HCT116 (cell line): ENCODE measurements at regions of chr20 and their contacts with region 1.

Region 1: DNA sequence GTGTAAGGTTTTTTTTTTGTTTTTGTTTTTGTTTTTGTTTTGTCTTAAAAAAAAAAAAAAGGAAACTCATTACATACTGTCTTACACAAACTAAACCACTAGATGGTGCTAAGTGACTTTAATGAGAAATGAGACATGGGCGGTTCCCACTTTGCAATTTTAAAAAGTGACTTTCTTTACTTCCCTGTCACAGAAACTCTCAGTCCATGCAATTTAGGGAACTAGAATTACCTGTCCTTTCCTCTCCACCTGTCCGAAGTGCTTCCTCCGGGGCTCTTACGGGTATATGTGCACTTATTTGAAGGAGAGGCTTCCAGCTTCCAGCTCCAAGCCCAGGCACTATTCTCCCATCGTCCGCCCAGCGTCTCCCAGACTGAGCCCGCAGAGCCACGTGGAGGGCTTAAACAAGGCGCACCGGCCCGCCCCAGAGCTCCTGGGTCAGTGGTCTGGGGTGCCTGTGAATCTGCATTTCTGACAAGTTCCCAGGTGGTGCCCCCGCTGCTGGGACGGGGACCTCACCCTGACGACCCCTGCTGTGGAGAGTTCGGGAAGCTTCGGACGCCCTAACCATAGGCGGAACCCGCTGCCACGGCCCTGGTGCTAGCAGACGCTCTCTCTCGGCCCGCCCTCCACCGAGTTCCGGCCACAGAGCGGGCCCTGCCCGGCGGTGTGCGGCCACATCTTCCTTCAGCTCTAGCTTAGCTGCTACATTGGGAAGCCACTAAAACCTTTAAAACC is 26.1 kb downstream of the BFSP1 start:
- DNase-seq: peak; percentile 27
- ATAC-seq: peak; percentile 71
- H3K4me3 ChIP-seq: peak overlapping the region in 1 of 2 experiments; percentile 3; a peak in 1 of 4 replicates
- H3K27ac ChIP-seq: no peak overlapping the region
- H3K4me1 ChIP-seq: peaks cover 6 to 20% of the 10 kb centered on the region in 2 experiments; a peak in 3 of 4 replicates
- H3K27me3 ChIP-seq: no peaks in the 10 kb centered on the region
- CTCF ChIP-seq: peak; percentile 39 to 77 (median 69); a peak in 4 of 6 replicates
- POLR2A ChIP-seq: no peak
- RAD21 ChIP-seq: peak; percentile 82

Region 2: DNA sequence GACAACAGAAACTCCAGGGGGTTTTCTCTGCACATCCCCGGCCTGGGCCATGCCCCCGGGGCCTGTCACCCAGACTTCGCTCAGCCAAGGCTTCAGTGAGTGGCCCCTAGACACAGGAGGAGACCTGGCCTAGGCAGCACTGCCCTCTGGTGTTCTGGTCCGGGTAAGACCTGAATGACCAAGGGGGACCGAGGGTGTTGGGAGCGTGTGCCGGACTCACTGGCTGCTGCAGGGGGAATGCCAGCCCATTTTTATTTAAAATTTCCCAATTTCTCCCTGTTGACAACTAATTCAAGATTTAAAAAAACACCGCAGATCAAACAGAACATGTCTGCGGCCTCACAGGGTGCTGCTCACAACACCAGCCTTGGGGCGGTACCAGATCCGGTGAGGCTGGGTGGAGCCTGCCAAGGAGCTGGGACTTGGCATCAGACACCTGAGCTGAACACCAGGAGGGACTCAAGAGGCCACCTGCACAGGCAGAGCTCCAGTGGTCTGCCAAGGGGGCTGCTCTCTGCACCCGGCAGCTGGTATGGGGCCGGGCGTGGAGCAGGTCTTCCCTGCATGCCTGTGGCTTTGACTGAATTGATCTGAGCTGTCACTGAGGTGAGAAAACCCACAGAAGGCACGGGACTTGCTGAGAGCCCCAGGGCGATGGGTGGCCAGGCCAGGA is 112.6 kb after region 1 on chr20:
- CTCF ChIA-PET with region 1: interaction called, 3 read pairs
- POLR2A ChIA-PET with region 1: no interaction called
- RAD21 ChIA-PET with region 1: no interaction called
- intact Hi-C with region 1: loop called (anchors 1 kb)
- DNase-seq: peak; percentile 18
- ATAC-seq: peak; percentile 80
- H3K4me3 ChIP-seq: no peak overlapping the region
- H3K27ac ChIP-seq: no peak overlapping the region
- H3K4me1 ChIP-seq: no peaks in the 10 kb centered on the region
- H3K27me3 ChIP-seq: no peaks in the 10 kb centered on the region
- CTCF ChIP-seq: peak; percentile 64 to 74 (median 68)
- POLR2A ChIP-seq: no peak
- RAD21 ChIP-seq: peak; percentile 84

Region 3: GRCh38 chr20:17648791-17649730 is 144.0 kb after region 1 on chr20:
- CTCF ChIA-PET with region 1: interaction called, 4 read pairs
- POLR2A ChIA-PET with region 1: no interaction called
- RAD21 ChIA-PET with region 1: no interaction called
- intact Hi-C with region 1: loop called (anchors 1 kb)
- DNase-seq: no peak
- ATAC-seq: peak; percentile 81
- H3K4me3 ChIP-seq: no peak overlapping the region
- H3K27ac ChIP-seq: no peak overlapping the region
- H3K4me1 ChIP-seq: no peaks in the 10 kb centered on the region; a peak in 1 of 4 replicates
- H3K27me3 ChIP-seq: no peaks in the 10 kb centered on the region
- CTCF ChIP-seq: peak; percentile 19 to 65 (median 64); a peak in 5 of 6 replicates
- POLR2A ChIP-seq: no peak
- RAD21 ChIP-seq: peak; percentile 34; the same call in 1 of the 2 replicates

Region 4: GRCh38 chr20:17898548-17898994 is 393.5 kb after region 1 on chr20:
- CTCF ChIA-PET with region 1: interaction called, 3 read pairs
- POLR2A ChIA-PET with region 1: no interaction called
- RAD21 ChIA-PET with region 1: no interaction called
- intact Hi-C with region 1: loop called (anchors 10 kb)
- DNase-seq: peak; percentile 56
- ATAC-seq: peak; percentile 77
- H3K4me3 ChIP-seq: no peak overlapping the region
- H3K27ac ChIP-seq: no peak overlapping the region
- H3K4me1 ChIP-seq: peaks cover 0 to 7% of the 10 kb centered on the region in 2 experiments; a peak in 2 of 4 replicates
- H3K27me3 ChIP-seq: no peaks in the 10 kb centered on the region
- CTCF ChIP-seq: peak; percentile 88 to 89 (median 89)
- POLR2A ChIP-seq: no peak
- RAD21 ChIP-seq: peak; percentile 96

Region 5: DNA sequence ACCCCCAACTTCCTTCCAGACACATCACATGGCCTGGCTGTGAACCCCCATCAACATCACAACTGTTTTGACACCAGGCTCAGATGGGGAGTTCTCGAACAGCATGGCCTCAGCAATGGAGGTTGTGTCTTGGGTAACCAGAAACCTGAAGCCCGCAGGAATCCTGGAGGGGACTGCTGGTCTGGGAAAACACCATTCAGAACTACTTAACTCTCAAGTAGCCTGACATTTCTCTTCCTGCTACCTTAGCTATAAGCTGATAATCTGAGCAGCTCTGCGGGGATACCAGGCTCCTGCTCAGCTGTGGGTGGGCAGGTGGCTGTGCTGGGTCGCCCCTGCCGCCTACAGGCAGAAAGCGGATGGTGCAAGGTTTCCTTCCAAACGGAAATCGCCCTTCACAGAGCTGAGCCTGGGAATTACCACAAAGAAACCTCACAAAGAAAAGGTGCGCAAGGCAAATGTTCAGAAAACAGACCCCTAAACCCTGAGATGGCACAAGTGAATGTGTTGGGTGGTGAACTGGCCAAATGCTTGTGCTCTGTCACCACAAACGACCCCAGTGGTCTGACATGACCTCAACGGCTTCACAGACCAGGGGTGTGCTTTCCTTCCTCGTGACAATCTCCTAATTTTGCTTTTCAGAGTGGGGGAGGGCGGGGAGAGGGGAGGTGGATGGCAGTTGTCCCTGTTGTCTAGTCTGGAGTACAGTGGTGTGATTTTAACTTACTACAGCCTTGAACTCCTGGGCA is 434.0 kb after region 1 on chr20:
- CTCF ChIA-PET with region 1: interaction called, 5 read pairs
- POLR2A ChIA-PET with region 1: no interaction called
- RAD21 ChIA-PET with region 1: no interaction called
- intact Hi-C with region 1: loop called (anchors 2 kb)
- DNase-seq: peak; percentile 22
- ATAC-seq: peak; percentile 85
- H3K4me3 ChIP-seq: no peak overlapping the region
- H3K27ac ChIP-seq: peak overlapping the region; percentile 24; the same call in 1 of the 2 replicates
- H3K4me1 ChIP-seq: peaks cover 0 to 11% of the 10 kb centered on the region in 2 experiments; a peak in 1 of 4 replicates
- H3K27me3 ChIP-seq: no peaks in the 10 kb centered on the region
- CTCF ChIP-seq: peak; percentile 66 to 95 (median 92); a peak in 5 of 6 replicates
- POLR2A ChIP-seq: no peak
- RAD21 ChIP-seq: peak; percentile 88

Region 6: GRCh38 chr20:17995967-17996819 is 491.1 kb after region 1 on chr20:
- CTCF ChIA-PET with region 1: no interaction called
- POLR2A ChIA-PET with region 1: no interaction called
- RAD21 ChIA-PET with region 1: no interaction called
- intact Hi-C with region 1: loop called (anchors 1 kb)
- DNase-seq: peak; percentile 26
- ATAC-seq: peak; percentile 76
- H3K4me3 ChIP-seq: no peak overlapping the region
- H3K27ac ChIP-seq: no peak overlapping the region
- H3K4me1 ChIP-seq: peaks cover 0 to 6% of the 10 kb centered on the region in 2 experiments; a peak in 2 of 4 replicates
- H3K27me3 ChIP-seq: no peaks in the 10 kb centered on the region
- CTCF ChIP-seq: peak; percentile 81 to 96 (median 92)
- POLR2A ChIP-seq: no peak
- RAD21 ChIP-seq: peak; percentile 85

Region 7: GRCh38 chr20:18276821-18277220 is 771.8 kb after region 1 on chr20:
- CTCF ChIA-PET with region 1: no interaction called
- POLR2A ChIA-PET with region 1: no interaction called
- RAD21 ChIA-PET with region 1: no interaction called
- intact Hi-C with region 1: loop called (anchors 2 kb)
- DNase-seq: peak; percentile 67
- ATAC-seq: peak; percentile 98
- H3K4me3 ChIP-seq: no peak overlapping the region
- H3K27ac ChIP-seq: no peak overlapping the region
- H3K4me1 ChIP-seq: 0 out of 4 replicates have a peak, but pooled peaks cover 0 to 4% of the 10 kb centered on the region in 2 experiments
- H3K27me3 ChIP-seq: no peaks in the 10 kb centered on the region
- CTCF ChIP-seq: peak; percentile 77 to 89 (median 87); a peak in 5 of 6 replicates
- POLR2A ChIP-seq: no peak
- RAD21 ChIP-seq: peak; percentile 94